Left cardiac atrium (tissue), 4 donors: ENCODE measurements at regions of chr1 and their contacts with region 1.

Region 1: DNA sequence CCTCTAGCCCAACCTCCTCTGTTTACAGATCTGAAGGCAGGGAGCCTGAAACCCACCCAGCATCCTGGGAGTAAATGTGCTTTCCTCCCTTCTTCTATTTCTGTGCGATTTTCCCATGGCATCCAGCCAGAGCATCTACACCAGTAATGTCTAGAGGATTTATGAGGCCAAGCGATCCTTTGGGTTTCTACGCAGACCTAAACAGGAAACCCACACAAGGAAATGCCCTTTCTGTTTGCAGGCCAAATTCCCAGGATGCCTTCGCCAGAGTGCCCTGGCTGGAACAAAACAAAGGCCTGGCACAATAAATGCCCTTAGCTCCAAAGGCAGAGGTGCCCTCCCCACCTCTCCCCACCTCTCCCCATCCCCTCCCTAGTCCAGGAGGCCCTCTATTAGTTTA is 110.5 kb upstream of the CDC42BPA start:
- DNase-seq: no peak
- ATAC-seq: peak; percentile 21 to 51

Region 2: DNA sequence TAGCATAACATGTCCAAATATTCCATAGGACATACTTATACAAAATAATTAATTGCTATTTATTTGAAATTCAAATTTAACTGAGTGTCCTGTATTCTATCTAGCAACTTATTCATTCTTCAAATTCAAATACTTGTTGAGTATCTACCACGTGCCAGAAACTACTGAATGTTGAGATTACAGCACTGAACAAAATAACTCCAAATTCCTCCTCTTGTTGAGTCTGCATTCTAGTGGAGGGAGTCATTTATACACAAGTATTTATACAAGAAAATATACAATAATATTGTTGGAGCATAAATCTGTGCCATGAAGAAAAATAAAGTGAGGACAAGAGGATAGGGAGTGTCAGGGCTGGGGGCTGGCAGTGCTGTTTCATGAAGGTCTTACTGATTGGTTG is 66.8 kb before region 1 on chr1:
- intact Hi-C with region 1: loop called (anchors 5 to 10 kb)
- DNase-seq: no peak
- ATAC-seq: no peak

Region 3: GRCh38 chr1:227369102-227369760 is 59.6 kb before region 1 on chr1:
- intact Hi-C with region 1: loop called (anchors 5 to 10 kb)
- DNase-seq: no peak
- ATAC-seq: no peak

Region 4: DNA sequence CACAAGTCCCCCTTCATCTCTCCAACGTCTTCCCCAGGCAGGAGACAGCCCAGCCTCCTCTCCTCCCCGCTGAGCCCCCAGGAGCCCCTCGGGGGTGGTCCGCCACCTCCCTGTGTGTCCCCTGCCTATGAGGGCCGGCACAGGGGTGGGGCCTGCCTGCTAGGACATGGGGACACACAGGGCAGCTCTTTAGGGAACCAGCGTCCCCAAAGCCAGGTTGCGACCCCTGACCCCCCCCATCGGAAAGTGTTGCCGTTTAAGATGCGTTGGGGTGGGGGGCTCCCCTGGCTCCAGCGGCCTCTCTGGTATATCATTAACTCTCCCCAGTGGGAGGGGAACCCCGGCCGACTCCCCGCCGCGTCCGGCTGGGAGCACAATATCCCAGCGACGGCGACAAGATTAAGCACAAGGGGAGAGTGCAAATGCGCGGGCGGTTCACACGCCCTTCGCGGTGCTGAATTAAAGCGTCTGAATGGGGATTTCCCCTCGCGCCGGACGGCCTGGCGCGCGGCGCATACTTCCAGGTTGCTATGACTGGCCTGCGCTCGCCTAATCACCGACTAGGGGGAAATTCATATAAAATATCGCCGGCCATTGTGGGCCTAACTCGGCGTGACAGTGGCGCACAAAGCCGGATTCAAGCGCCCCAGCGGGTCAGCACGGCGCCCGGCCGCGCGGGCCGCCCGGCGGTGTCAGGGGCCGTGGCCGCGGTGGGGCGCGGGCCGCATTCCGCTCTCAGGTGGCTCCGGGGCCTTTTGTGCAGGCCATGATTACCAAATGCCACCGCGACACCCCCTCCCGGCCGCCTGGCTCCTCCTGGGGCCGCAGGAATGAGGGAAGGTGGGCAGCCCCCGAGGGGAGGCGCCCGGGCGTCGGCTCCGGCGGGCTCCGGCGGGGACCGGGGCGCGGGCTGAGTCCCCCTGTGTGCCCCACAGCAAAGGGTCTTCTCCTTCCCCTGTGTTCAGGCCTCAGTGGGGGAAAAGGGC is 608.9 kb after region 1 on chr1:
- intact Hi-C with region 1: no loop called
- DNase-seq: no peak
- ATAC-seq: peak; percentile 15 to 81